Activated CD4-positive, alpha-beta T cell treated with anti-CD3 and anti-CD28 coated beads, Interleukin-2, amount 10 ng/mL, durations not matched to agents 7 days and 5 days (primary cell): ENCODE measurements at regions of chr3 and their contacts with region 1.

Region 1: DNA sequence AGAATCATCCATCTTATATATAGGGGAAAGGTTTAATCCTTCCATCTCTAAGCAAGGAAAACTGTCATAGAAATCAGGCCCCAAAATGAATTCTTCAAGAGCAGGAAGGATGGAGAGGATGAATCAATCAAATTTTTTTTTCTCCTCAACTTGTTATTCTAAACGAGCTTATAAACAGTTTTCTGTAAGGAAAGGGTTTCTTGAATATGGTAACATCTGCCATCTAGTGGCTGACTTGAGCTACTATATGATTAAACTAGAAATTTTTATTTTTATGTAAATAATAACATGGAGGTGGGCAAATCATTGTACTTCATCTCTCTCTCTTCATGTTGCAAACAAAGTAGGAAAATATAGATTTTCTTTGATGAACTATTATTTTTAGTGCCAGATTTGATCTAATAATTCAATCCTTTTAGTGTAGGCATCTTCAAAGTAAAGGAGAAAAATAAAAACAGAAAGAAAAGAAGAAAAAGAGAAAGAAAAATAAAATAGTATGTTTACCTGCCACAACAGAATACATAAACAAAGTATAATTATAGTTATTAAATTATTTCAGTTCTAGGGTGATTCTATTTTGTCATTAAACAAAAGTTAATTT is 146.6 kb downstream of the SERPINI1 start:
- DNase-seq: no peak
- H3K4me3 Mint-ChIP-seq: no peak overlapping the region
- H3K27ac Mint-ChIP-seq: no peak overlapping the region
- H3K4me1 Mint-ChIP-seq: peaks cover 4% of the 10 kb centered on the region
- H3K27me3 Mint-ChIP-seq: peaks cover 18% of the 10 kb centered on the region

Region 2: DNA sequence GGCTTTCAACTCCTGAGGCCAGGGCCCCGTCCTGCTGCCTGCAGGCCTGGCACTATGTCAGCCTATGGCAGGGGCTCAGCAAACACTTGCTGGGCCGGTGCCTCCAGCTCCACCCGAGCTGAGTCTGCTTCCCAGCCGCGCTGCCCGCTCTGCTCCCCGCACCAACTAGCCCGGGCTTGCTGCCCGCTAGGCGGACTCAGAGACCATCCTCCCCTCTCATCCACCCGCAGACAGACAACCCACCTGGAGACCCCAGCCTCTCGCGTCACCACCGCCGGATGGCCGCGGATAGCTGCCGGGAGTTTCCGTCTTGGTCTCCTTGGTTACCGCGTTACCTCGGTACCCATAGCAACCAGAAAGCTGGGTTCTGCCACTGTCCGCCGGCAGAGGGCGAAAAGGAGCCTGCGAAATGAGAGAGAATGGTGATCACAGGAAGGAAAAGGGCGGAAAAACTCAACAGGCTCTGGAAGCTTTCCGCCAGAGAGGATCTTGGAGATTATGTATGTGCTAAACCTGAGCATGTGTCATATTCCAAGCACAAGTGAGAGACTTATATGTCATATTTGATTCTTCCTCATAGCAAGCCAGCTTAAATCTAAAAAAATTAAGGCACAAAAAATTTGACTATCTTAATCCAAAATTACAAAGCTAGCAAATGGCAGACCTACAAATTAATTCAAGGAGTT is 502.0 kb before region 1 on chr3 and contains the start of gene ZBBX:
- CTCF ChIA-PET with region 1: interaction called, 12 read pairs
- POLR2A ChIA-PET with region 1: no interaction called
- DNase-seq: peak; percentile 88
- H3K4me3 Mint-ChIP-seq: peak within 1 kb of the TSS; percentile 69
- H3K27ac Mint-ChIP-seq: no peak within 1 kb of the TSS
- H3K4me1 Mint-ChIP-seq: peaks cover 10% of the 10 kb centered on the region
- H3K27me3 Mint-ChIP-seq: peaks cover 12% of the 10 kb centered on the region
- total RNA-seq, gene ZBBX: not detected